Posterior vena cava (tissue), 2 donors: ENCODE measurements at regions of chr5 and their contacts with region 1.

Region 1: GRCh38 chr5:79689541-79690466 is at the start of gene CMYA5:
- DNase-seq: no peak
- total RNA-seq, gene CMYA5: 2.6 to 3.5 TPM

Region 2: DNA sequence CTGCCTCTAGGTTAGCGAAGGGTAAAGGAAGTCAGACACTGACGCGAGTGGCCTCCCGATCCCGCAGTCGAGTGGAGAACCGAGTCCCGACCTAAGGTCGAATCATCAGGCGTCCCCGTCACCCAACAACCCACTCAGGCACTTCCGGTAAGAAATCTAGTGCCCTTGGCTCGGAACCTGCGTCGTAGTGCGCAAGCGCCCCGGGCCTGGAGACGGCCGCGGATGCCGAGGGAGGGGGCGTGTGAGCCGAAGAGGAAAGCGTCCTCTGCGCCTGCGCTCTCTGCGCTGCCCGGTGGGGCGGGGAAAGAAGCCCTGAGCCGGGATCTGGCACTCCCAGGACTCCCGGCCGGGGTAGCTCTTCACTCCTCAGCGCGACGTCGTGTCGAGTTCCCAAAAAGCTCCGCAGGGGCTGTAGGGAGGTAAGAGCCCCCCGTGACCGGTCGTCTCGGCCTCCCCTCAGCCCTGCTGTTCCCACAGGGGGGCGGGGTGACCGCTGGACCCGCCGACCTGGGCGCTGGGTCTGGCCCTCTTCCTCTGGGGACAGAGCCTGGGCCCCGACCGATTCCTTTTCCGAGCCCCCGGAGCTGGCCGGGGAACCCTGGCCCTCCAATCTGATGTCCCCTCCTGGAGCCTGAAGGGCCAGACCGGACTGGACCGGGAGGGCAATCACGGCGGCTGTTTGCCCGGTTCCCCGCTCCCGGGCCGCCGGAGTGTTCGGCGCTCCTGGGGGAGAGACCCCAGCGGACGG is 718.1 kb after region 1 on chr5 and contains the start of gene ZFYVE16:
- intact Hi-C with region 1: loop called in 1 of 2 experiments (anchors 5 kb)
- DNase-seq: peak; percentile 100
- total RNA-seq, gene ZFYVE16: 35.2 to 41.3 TPM